Activated CD4-positive, alpha-beta T cell treated with anti-CD3 and anti-CD28 coated beads, Interleukin-2, amount 10 ng/mL, durations not matched to agents 24 days and 14 days (primary cell): ENCODE measurements at regions of chr1 and their contacts with region 1.

Region 1: DNA sequence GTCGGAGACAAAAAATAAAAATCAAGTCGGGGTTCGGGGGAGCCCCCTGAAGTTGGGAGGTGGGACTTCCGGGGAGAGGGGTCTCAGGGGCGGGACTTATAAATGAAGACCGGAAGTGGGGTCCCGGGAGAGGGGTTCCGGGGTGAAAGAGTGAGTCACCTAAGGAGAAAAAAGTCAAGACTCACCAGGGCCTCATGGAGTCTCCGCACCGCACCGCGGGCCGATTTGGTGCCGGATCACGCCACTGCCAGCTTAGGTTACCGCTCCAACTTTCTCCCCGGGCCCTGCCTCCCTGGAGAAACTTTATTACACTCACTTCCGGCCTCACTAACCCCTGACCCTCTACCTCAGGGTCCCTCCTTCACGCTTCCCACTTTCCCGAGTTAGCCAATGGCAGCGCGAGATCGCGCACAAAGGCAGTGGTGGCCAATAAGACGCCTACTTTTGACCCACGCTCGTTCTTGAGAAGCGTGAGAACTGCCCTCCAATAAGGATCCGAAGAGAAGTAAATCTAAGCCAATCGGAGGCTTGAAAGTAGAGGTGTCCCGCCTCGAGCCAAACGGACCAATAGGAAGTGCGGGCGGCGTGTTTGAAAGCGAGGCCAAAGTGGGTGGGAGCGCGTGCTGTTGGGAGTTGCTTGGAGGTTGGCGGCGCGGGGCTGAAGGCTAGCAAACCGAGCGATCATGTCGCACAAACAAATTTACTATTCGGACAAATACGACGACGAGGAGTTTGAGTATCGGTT is at the start of gene CKS1B:
- DNase-seq: peak; percentile 98
- H3K4me3 Mint-ChIP-seq: no peak within 1 kb of the TSS
- H3K27ac Mint-ChIP-seq: no peak within 1 kb of the TSS
- H3K4me1 Mint-ChIP-seq: peaks cover 39% of the 10 kb centered on the region
- H3K27me3 Mint-ChIP-seq: no peaks in the 10 kb centered on the region
- total RNA-seq, gene CKS1B: 179 and 181 TPM in 2 replicates

Region 2: GRCh38 chr1:154220071-154220969 is 753.9 kb before region 1 on chr1 and contains the start of gene UBAP2L:
- intact Hi-C with region 1: loop called (anchors 1 kb)
- DNase-seq: peak; percentile 100
- H3K4me3 Mint-ChIP-seq: peak within 1 kb of the TSS; percentile 96
- H3K27ac Mint-ChIP-seq: peak within 1 kb of the TSS; percentile 95
- H3K4me1 Mint-ChIP-seq: peaks cover 55% of the 10 kb centered on the region
- H3K27me3 Mint-ChIP-seq: peaks cover 3% of the 10 kb centered on the region
- total RNA-seq, gene UBAP2L: 277 and 281 TPM in 2 replicates

Region 3: GRCh38 chr1:154256686-154257085 is 717.5 kb before region 1 on chr1:
- intact Hi-C with region 1: no loop called
- DNase-seq: no peak
- H3K4me3 Mint-ChIP-seq: no peak overlapping the region
- H3K27ac Mint-ChIP-seq: no peak overlapping the region
- H3K4me1 Mint-ChIP-seq: peaks cover 2% of the 10 kb centered on the region
- H3K27me3 Mint-ChIP-seq: no peaks in the 10 kb centered on the region

Region 4: GRCh38 chr1:154955718-154956543 is 18.3 kb before region 1 on chr1 and contains the start of gene PBXIP1:
- intact Hi-C with region 1: loop called (anchors 1 kb)
- DNase-seq: peak; percentile 97
- H3K4me3 Mint-ChIP-seq: peak within 1 kb of the TSS; percentile 87
- H3K27ac Mint-ChIP-seq: peak within 1 kb of the TSS; percentile 96
- H3K4me1 Mint-ChIP-seq: peaks cover 63% of the 10 kb centered on the region
- H3K27me3 Mint-ChIP-seq: no peaks in the 10 kb centered on the region
- total RNA-seq, gene PBXIP1: 19.3 and 21.6 TPM in 2 replicates

Region 5: DNA sequence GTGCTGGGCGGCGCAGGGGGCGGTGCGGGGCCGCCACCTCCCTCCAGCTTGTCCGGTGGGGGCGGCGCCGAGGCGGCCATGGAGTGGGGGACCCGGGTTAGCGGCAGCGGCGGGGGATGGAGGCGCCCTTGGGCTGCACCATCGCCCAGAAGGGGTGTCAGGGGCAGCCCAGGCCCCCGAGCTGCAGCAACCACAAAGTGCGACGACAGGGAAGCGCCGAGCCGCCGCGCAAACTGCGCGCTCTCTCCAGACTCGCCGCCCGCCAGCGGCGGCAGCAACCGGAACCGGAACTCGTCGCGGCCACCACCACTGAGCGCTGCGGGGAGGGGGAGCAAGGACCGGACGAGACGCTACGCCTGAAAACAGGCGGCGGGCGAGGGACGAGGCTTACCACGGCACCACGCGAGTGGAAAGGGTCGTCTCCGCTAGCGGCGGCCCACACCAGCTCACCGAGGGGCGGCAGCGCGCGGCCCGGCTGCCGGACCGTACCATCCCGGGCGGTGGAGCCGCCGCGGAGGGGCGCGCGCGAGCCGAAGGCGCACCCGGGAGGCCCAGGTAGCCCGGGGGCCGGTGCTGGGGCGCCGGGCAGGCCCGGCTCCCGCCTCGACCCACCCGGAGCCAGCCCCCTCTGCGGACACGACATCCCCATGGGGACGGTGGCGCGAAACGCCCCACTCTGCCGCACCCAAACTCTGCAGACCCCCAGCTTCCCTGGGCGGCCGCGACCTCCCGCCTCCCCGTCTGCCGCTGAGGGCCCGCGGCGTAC is 12.6 kb before region 1 on chr1 and contains the start of gene PYGO2:
- intact Hi-C with region 1: loop called (anchors 1 kb)
- DNase-seq: peak; percentile 96
- H3K4me3 Mint-ChIP-seq: peak within 1 kb of the TSS; percentile 96
- H3K27ac Mint-ChIP-seq: peak within 1 kb of the TSS; percentile 89
- H3K4me1 Mint-ChIP-seq: peaks cover 26% of the 10 kb centered on the region
- H3K27me3 Mint-ChIP-seq: no peaks in the 10 kb centered on the region
- total RNA-seq, gene PYGO2: 34.4 and 34.8 TPM in 2 replicates

Region 6: DNA sequence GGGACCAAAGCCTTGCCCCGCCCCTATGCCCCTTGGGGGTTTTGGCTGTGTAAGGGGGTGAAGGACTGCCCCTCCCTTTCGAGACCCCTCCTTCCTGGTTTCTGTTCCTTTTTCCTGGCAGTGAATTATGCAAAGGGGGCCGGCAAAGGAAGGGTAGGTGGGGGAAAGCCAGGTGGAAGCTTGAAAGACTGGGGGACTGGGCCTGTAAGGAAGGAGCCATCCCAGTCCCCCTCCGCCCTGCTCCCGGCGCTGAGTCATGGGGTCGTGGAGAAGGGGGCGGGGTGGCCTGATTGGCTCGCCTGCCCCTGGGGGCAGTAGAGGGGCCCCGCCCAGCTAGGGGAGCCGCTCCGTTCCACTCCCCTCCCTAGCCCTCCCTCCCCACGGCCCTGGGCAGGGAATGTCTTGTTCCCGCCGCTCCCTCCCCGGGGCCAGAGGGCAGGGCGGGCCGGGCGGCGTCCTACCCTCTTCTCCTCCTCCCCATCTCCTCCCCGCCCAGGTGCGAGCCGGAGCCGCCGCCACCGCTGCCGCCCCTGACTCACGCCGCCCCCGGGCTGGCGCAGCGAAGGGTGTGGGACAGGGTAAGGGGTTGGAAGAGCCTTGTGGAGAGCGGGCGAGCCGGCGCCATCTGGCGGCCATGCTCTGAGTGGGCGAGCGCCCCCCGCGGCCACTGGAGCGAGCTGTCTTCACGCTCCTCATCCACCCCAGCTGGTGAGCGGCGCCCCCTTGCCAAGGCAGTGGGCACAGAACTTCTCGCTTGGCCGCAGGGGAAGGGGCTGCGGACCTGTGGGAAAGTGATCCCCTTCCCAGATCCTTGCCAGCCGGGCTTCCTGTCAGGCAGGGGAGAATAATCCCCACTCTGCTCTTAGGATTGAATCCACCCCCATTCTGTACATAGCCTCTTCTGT is 43.1 kb after region 1 on chr1:
- intact Hi-C with region 1: loop called (anchors 1 kb)
- DNase-seq: peak; percentile 96
- H3K4me3 Mint-ChIP-seq: peak overlapping the region; percentile 78
- H3K27ac Mint-ChIP-seq: peak overlapping the region; percentile 37
- H3K4me1 Mint-ChIP-seq: peaks cover 52% of the 10 kb centered on the region
- H3K27me3 Mint-ChIP-seq: no peaks in the 10 kb centered on the region